ENCODE measurements at regions of chr4 and their contacts with region 1.

Region 1: DNA sequence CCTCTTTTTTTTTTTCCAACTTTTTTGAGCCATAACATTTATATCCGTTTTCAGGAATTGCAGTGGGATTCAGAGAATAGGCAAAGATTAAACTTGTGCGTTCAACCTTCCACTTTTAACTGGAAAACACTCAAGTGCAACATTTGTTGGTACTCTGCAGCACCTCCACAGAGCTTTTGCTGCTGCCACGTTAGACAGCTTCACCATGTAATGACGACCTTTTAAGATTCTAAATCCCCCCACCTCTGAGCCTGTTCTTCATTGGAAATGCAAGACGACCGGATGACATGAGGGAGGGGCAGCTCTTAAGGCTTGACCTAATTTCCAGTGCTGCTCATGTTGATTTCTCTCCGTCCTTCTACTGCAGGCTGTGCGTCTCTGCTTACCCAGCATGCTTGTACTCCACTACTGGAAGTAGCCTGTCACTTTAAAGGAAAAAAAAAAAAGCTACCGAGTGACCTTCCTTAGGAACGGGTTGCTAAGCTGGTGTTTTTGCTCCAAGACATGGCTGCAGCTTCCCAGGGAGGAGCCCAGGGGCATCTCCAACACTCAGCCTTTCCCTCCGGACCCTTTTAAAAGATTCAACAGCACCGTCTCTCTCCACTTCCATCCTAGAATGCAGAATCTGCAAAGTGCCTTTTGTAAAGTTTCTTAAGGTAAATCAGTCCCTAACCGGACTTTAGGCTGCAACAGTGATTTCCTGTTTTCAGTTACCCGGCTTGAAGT is at the start of gene CC2D2A:
- DNase-seq: peak in 2 of 5 donors; percentile 22 to 35
- ATAC-seq: peak; percentile 78 to 94 (median 90)
- H3K4me3 ChIP-seq: peak within 1 kb of the TSS; percentile 28 to 76 (median 62)
- H3K27ac ChIP-seq: peak within 1 kb of the TSS in 11 of 12 donors; percentile 1 to 74 (median 42)
- H3K4me1 ChIP-seq: peaks cover 0 to 37% (median 12%) of the 10 kb centered on the region in 12 donors
- H3K27me3 ChIP-seq: no peaks in the 10 kb centered on the region
- CTCF ChIP-seq: no peak
- POLR2A ChIP-seq: no peak
- total RNA-seq, gene CC2D2A: 3.1 to 14.4 (median 9.0) TPM

Region 2: GRCh38 chr4:13635286-13635799 is 1834.2 kb before region 1 on chr4:
- intact Hi-C with region 1: loop called in 1 of 10 experiments (anchors 10 kb)
- DNase-seq: no peak
- ATAC-seq: no peak
- H3K4me3 ChIP-seq: no peak overlapping the region
- H3K27ac ChIP-seq: no peak overlapping the region
- H3K4me1 ChIP-seq: peaks cover 0 to 13% (median 0%) of the 10 kb centered on the region in 12 donors
- H3K27me3 ChIP-seq: peaks cover 0 to 9% (median 0%) of the 10 kb centered on the region in 9 donors
- CTCF ChIP-seq: no peak
- POLR2A ChIP-seq: no peak

Region 3: DNA sequence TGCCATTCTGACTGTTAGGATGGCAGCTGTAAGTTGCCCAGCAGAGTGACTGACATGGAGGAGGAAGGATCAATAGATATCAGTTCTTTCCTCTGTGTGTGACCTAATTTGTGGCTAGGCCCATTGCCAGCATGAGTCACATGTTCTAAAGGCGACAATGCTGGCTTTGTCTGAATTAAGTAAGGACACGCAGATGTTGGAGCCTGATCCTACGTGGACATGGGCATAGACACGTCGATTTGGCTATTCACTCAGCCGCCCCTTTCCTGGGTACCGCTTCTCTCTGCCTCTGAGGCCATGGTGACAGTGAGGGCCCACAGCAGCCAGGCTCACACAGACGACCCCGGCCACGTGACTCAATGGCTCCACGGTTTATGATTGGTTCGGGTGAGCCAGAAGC is 598.0 kb after region 1 on chr4:
- intact Hi-C with region 1: no loop called
- DNase-seq: no peak
- ATAC-seq: no peak
- H3K4me3 ChIP-seq: no peak overlapping the region
- H3K27ac ChIP-seq: no peak overlapping the region
- H3K4me1 ChIP-seq: no peaks in the 10 kb centered on the region
- H3K27me3 ChIP-seq: no peaks in the 10 kb centered on the region
- CTCF ChIP-seq: no peak
- POLR2A ChIP-seq: no peak

Measured in heart left ventricle (tissue), 16 donors.